ENCODE measurements at regions of chr2 and their contacts with region 1.

Region 1: GRCh38 chr2:191499874-191500565 is 177.9 kb upstream of the NABP1 start:
- DNase-seq: no peak
- H3K4me3 ChIP-seq: no peak overlapping the region
- H3K27ac ChIP-seq: no peak overlapping the region
- H3K4me1 ChIP-seq: peaks cover 0 to 12% (median 0%) of the 10 kb centered on the region in 6 donors
- H3K27me3 ChIP-seq: peaks cover 0 to 11% (median 0%) of the 10 kb centered on the region in 7 donors
- CTCF ChIP-seq: no peak
- POLR2A ChIP-seq: no peak

Region 2: GRCh38 chr2:191222507-191222906 is 277.5 kb before region 1 on chr2:
- intact Hi-C with region 1: loop called (anchors 10 kb)
- DNase-seq: no peak
- H3K4me3 ChIP-seq: no peak overlapping the region
- H3K27ac ChIP-seq: no peak overlapping the region
- H3K4me1 ChIP-seq: peaks cover 0 to 13% (median 3%) of the 10 kb centered on the region in 6 donors
- H3K27me3 ChIP-seq: no peaks in the 10 kb centered on the region
- CTCF ChIP-seq: no peak
- POLR2A ChIP-seq: no peak